ENCODE measurements at regions of chr1 and their contacts with region 1.

Region 1: DNA sequence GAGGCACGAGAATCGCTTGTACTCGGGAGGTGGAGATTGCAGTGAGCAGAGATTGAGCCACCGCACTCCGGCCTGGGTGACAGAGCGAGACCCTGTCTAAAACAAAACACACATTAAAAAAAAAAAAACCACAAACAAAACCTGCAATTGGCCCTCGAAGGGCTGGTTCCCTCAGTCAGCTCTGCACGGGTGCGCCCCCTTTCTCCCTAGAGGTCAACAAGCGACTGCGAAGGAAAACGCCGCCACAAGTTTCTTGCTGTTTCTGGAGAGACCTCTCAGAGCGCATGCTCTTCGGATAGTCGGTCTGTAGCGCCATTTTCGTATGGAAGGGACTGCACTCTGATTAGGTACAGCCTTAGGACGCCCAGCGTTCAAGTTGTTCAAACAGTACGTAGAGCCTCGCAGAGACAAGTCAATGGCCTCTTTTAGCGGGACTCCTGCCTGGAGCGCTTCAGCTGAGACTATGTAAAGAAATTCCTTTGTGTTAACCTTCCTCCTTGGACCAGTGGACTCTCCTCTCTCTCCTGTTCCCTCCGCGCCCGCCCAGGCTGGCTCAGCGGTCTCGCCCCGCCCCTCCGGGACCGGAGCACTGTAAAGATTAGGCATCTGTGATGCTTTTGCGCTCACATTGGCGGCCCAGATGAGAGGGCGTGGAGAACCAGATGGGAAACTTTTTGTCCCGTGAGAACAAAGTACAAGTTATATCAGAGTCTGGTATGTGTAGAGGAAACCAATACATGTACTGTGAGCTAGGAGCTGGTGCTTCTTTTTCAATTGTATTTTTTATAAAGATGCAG is 1.0 kb upstream of the CDC14A start:
- DNase-seq: peak; percentile 73 to 91 (median 85)
- ATAC-seq: peak; percentile 82
- H3K4me3 ChIP-seq: peak overlapping the region; percentile 94
- H3K4me3 Mint-ChIP-seq: peak overlapping the region; percentile 89 to 100 (median 98)
- H3K27ac ChIP-seq: peak overlapping the region; percentile 89
- H3K27ac Mint-ChIP-seq: peak overlapping the region; percentile 95 to 100 (median 98)
- H3K4me1 ChIP-seq: peaks cover 10 to 19% of the 10 kb centered on the region in 2 donors
- H3K4me1 Mint-ChIP-seq: peaks cover 23 to 35% (median 26%) of the 10 kb centered on the region in 7 donors
- H3K27me3 ChIP-seq: no peaks in the 10 kb centered on the region
- H3K27me3 Mint-ChIP-seq: peaks cover 0 to under 1% (median 0%) of the 10 kb centered on the region in 5 donors

Region 2: GRCh38 chr1:100037927-100038659 is 313.2 kb before region 1 on chr1:
- CTCF ChIA-PET with region 1: no interaction called
- POLR2A ChIA-PET with region 1: interaction called, 3 read pairs
- intact Hi-C with region 1: loop called (anchors 1 kb)
- DNase-seq: peak; percentile 83 to 92 (median 88)
- ATAC-seq: peak; percentile 91
- H3K4me3 ChIP-seq: peak overlapping the region; percentile 70
- H3K4me3 Mint-ChIP-seq: peak overlapping the region; percentile 93 to 99 (median 97)
- H3K27ac ChIP-seq: peak overlapping the region; percentile 99
- H3K27ac Mint-ChIP-seq: peak overlapping the region; percentile 97 to 100 (median 99)
- H3K4me1 ChIP-seq: peaks cover 22 to 31% of the 10 kb centered on the region in 2 donors
- H3K4me1 Mint-ChIP-seq: peaks cover 29 to 68% (median 58%) of the 10 kb centered on the region in 7 donors
- H3K27me3 ChIP-seq: no peaks in the 10 kb centered on the region
- H3K27me3 Mint-ChIP-seq: no peaks in the 10 kb centered on the region

Region 3: DNA sequence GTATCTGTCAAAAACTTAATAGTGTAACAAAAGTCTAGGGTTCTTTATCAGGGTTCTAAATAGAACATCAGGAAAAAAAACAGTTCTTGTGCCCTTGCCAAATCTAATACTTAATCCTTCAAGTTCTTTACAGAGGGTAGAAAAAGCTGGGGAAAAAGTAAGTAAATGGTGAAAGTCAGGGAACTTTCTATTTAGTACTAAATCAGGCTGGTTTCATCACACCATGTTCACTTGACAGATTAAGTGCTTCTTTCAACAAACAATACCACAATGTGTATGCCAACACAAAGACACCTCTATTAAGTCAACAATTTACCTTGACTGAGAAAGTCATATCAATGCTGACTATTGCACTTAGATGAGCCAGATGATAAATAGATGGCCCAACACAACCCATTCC is 111.3 kb before region 1 on chr1:
- CTCF ChIA-PET with region 1: no interaction called
- POLR2A ChIA-PET with region 1: no interaction called
- intact Hi-C with region 1: no loop called
- DNase-seq: no peak
- ATAC-seq: no peak
- H3K4me3 ChIP-seq: no peak overlapping the region
- H3K4me3 Mint-ChIP-seq: no peak overlapping the region
- H3K27ac ChIP-seq: no peak overlapping the region
- H3K27ac Mint-ChIP-seq: no peak overlapping the region
- H3K4me1 ChIP-seq: no peaks in the 10 kb centered on the region
- H3K4me1 Mint-ChIP-seq: peaks cover 10 to 41% (median 26%) of the 10 kb centered on the region in 7 donors
- H3K27me3 ChIP-seq: no peaks in the 10 kb centered on the region
- H3K27me3 Mint-ChIP-seq: no peaks in the 10 kb centered on the region

Region 4: GRCh38 chr1:100277866-100278265 is 73.4 kb before region 1 on chr1:
- CTCF ChIA-PET with region 1: no interaction called
- POLR2A ChIA-PET with region 1: no interaction called
- intact Hi-C with region 1: loop called in 1 of 2 experiments (anchors 2 kb)
- DNase-seq: peak in 6 of 9 donors; percentile 5 to 42 (median 28)
- ATAC-seq: peak; percentile 75
- H3K4me3 ChIP-seq: no peak overlapping the region
- H3K4me3 Mint-ChIP-seq: no peak overlapping the region
- H3K27ac ChIP-seq: no peak overlapping the region
- H3K27ac Mint-ChIP-seq: peak overlapping the region in 3 of 9 donors; percentile 9 to 37 (median 27)
- H3K4me1 ChIP-seq: no peaks in the 10 kb centered on the region
- H3K4me1 Mint-ChIP-seq: peaks cover 9 to 50% (median 34%) of the 10 kb centered on the region in 7 donors
- H3K27me3 ChIP-seq: no peaks in the 10 kb centered on the region
- H3K27me3 Mint-ChIP-seq: no peaks in the 10 kb centered on the region

Region 5: DNA sequence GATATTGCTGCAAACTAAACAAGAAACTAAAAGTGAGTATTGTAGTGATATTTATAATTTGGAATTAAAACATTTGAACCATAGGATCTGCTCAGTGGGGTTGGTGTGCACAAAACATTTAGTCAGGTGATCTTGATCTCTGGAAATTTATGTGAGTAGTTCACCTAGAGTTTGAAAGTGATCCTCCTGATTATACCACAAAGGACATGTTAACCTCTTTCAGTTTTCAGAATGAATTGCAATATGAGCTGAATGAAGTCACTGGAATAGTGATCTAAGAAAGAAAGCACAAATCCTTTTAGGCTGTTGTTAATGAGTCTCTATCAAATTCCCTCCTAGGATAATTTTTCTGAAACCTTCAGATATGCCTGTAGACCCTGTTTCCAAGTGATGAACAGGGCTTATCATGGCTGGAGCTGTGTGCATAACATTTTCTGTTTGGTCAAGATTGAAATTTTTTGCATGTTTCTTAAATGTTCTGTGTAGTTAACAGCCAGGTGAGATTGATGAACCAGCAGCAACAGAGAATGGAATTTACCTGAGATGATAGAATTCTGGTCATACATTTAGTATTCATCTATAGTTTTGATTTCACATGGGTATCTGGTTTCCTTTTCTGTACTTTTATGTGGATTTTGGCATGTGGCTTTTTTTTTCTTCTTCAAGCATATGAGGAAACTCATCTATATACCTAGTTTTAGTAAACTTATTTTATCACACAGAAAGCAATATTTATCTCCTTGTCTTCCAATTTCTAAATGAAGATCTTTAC is 26.5 kb after region 1 on chr1:
- CTCF ChIA-PET with region 1: no interaction called
- POLR2A ChIA-PET with region 1: interaction called, 196 read pairs
- intact Hi-C with region 1: loop called in 1 of 2 experiments (anchors 1 kb)
- DNase-seq: peak in 1 of 9 donors; percentile 28
- ATAC-seq: peak; percentile 68
- H3K4me3 ChIP-seq: no peak overlapping the region
- H3K4me3 Mint-ChIP-seq: peak overlapping the region in 9 of 10 donors; percentile 2 to 73 (median 61)
- H3K27ac ChIP-seq: peak overlapping the region; percentile 46
- H3K27ac Mint-ChIP-seq: peak overlapping the region in 8 of 9 donors; percentile 13 to 78 (median 74)
- H3K4me1 ChIP-seq: peaks cover 23 to 36% of the 10 kb centered on the region in 2 donors
- H3K4me1 Mint-ChIP-seq: peaks cover 41 to 92% (median 79%) of the 10 kb centered on the region in 7 donors
- H3K27me3 ChIP-seq: no peaks in the 10 kb centered on the region
- H3K27me3 Mint-ChIP-seq: no peaks in the 10 kb centered on the region

Region 6: GRCh38 chr1:100423832-100424337 is 72.6 kb after region 1 on chr1:
- CTCF ChIA-PET with region 1: interaction called, 3 read pairs
- POLR2A ChIA-PET with region 1: interaction called, 30 read pairs
- intact Hi-C with region 1: no loop called
- DNase-seq: peak in 4 of 9 donors; percentile 26 to 58 (median 52)
- ATAC-seq: peak; percentile 56
- H3K4me3 ChIP-seq: peak overlapping the region; percentile 41
- H3K4me3 Mint-ChIP-seq: peak overlapping the region; percentile 51 to 88 (median 80)
- H3K27ac ChIP-seq: peak overlapping the region; percentile 69
- H3K27ac Mint-ChIP-seq: peak overlapping the region; percentile 85 to 98 (median 92)
- H3K4me1 ChIP-seq: peaks cover 29 to 43% of the 10 kb centered on the region in 2 donors
- H3K4me1 Mint-ChIP-seq: peaks cover 31 to 92% (median 73%) of the 10 kb centered on the region in 7 donors
- H3K27me3 ChIP-seq: no peaks in the 10 kb centered on the region
- H3K27me3 Mint-ChIP-seq: no peaks in the 10 kb centered on the region

Region 7: GRCh38 chr1:100459358-100460114 is 108.2 kb after region 1 on chr1:
- CTCF ChIA-PET with region 1: interaction called, 81 read pairs
- POLR2A ChIA-PET with region 1: interaction called, 37 read pairs
- intact Hi-C with region 1: loop called in 1 of 2 experiments (anchors 1 kb)
- DNase-seq: peak; percentile 34 to 62 (median 53)
- ATAC-seq: peak; percentile 87
- H3K4me3 ChIP-seq: no peak overlapping the region
- H3K4me3 Mint-ChIP-seq: peak overlapping the region in 8 of 10 donors; percentile 15 to 65 (median 40)
- H3K27ac ChIP-seq: no peak overlapping the region
- H3K27ac Mint-ChIP-seq: peak overlapping the region; percentile 11 to 93 (median 74)
- H3K4me1 ChIP-seq: peaks cover 18 to 22% of the 10 kb centered on the region in 2 donors
- H3K4me1 Mint-ChIP-seq: peaks cover 21 to 81% (median 59%) of the 10 kb centered on the region in 7 donors
- H3K27me3 ChIP-seq: no peaks in the 10 kb centered on the region
- H3K27me3 Mint-ChIP-seq: no peaks in the 10 kb centered on the region